IMR-90 (cell line): ENCODE measurements at regions of chr2 and their contacts with region 1.

Region 1: DNA sequence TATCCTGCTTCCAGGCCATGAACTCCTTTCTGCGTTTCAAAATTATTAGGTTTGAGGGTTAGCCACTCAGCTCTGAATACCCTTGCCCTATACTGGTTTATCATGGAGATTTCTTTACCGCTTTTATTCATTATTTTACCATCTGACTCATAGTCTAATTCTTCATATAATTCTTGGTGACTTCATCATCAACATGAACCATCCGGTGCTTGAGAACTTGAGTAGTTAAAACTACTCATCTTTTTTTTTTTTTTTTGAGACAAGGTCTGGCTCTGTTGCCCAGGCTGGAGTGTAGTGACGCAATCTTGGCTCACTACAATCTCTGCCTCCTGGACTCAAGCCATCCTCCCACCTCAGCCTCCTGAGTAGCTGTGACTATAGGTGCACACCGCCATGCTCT is 94.2 kb upstream of the LHCGR start:
- DNase-seq: peak; percentile 92
- ATAC-seq: peak; percentile 56
- H3K4me3 ChIP-seq: no peak overlapping the region
- H3K27ac ChIP-seq: peak overlapping the region; percentile 88
- H3K4me1 ChIP-seq: peaks cover 34% of the 10 kb centered on the region
- H3K27me3 ChIP-seq: no peaks in the 10 kb centered on the region
- CTCF ChIP-seq: no peak
- POLR2A ChIP-seq: no peak
- RAD21 ChIP-seq: no peak

Region 2: DNA sequence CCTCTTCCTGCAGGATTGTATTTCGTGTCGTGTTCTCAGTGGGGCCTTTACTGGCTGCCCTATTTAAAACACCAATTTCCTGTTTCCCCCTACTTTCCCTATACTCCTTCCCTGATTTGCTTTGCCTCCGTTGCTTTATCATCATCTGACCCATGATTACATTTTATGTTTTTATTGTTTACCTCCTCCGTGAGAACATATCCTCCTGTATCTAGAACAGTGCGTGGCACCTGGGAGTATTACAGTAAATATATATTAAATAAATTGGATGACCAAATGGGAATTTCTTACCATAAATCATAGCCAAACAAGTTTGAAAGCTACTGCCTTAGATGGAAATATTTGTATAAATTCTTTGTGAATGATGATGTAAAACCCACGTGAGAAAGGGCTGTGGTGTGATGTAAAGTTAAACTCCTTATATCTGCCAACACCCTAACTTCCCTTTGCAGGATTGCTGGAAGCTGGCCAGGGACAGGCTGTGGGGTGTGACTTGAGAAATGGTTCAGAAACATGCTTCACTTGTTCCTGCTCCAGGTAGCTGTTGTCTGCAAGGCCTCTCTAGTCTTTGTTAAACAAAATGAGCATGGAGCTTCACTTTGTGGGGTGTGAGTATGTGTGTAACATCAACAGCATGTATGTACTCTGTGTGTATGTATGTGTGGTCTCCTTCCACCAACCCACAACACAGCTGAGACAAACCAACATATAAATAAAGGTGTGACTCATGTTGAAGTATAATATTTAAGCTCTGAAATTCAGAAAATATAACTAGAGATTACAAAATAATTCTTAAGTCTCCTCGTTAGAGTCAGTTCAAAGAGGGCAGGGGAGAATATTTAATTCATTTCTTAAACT is 134.5 kb before region 1 on chr2:
- CTCF ChIA-PET with region 1: interaction called, 3 read pairs
- POLR2A ChIA-PET with region 1: interaction called, 3 read pairs
- dilution Hi-C with region 1: no loop called
- in situ Hi-C with region 1: loop called (anchors 10 kb)
- intact Hi-C with region 1: loop called (anchors 2 kb)
- DNase-seq: peak; percentile 96
- ATAC-seq: peak; percentile 33
- H3K4me3 ChIP-seq: no peak overlapping the region
- H3K27ac ChIP-seq: peak overlapping the region; percentile 94
- H3K4me1 ChIP-seq: peaks cover 26% of the 10 kb centered on the region
- H3K27me3 ChIP-seq: no peaks in the 10 kb centered on the region
- CTCF ChIP-seq: no peak
- POLR2A ChIP-seq: no peak
- RAD21 ChIP-seq: no peak

Region 3: DNA sequence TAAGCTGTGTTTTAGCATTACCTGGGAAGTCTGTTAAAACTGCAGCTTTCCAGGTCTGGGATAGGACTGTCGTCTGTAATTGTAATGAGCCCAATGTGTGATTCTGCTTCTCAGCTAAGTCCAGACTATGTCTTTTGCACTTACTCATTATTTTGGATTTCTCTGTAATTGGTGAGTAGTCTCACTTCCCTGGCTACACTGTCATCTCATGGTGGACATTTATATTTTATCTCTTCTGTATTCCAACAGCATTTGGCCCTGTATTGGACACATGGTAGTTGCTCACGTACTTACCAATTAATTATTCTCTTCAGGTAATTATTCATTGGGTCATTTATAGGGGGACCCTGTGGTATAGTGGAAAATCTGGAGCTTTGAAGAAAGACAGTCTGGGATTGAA is 122.2 kb before region 1 on chr2:
- CTCF ChIA-PET with region 1: no interaction called
- POLR2A ChIA-PET with region 1: no interaction called
- dilution Hi-C with region 1: no loop called
- in situ Hi-C with region 1: no loop called
- intact Hi-C with region 1: loop called (anchors 2 kb)
- DNase-seq: no peak
- ATAC-seq: no peak
- H3K4me3 ChIP-seq: no peak overlapping the region
- H3K27ac ChIP-seq: no peak overlapping the region
- H3K4me1 ChIP-seq: peaks cover 11% of the 10 kb centered on the region
- H3K27me3 ChIP-seq: no peaks in the 10 kb centered on the region
- CTCF ChIP-seq: no peak
- POLR2A ChIP-seq: no peak
- RAD21 ChIP-seq: no peak